Endothelial cell of umbilical vein (primary cell): ENCODE measurements at regions of chr6 and their contacts with region 1.

Region 1: DNA sequence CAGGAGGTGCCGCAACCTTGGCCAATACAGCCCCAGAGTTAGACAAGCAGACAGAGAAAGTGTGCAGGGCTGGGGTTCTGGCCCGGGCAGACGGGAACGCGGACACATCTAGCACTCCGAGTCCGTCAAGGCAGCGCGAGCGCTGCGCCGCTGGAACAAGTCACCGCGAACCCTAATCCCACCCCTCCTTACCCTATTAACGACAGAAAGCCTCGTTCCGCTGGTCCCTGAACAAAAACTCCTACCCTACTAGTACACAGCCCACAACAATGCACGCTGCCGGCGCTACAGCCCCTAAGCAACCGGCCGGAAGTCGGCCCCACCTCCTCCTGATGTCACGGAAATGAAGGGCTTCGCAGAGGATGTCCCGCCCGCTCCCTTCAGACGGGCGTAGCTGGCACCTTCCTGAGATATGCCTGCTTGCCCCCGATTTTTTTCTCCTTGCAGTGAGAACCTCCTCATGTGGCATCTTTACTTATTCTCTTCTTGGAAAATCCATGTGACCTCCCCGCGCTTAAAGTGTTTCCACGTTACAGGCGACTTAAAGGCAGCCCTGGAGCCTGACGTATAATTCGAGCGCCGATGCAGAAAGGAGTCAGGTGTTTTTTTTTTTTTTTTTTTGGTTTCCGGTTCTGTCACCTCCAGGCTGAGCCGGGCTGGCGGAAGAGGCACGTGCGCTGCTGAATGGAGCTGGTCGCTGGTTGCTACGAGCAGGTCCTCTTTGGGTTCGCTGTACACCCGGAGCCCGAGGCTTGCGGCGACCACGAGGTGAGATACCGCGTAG is at the starts of genes C6orf52 and PAK1IP1:
- DNase-seq: peak; percentile 97
- H3K4me3 ChIP-seq: peak within 1 kb of the TSS; percentile 93 to 100 (median 100)
- H3K27ac ChIP-seq: peak within 1 kb of the TSS; percentile 95
- H3K4me1 ChIP-seq: peaks cover 19% of the 10 kb centered on the region
- H3K27me3 ChIP-seq: no peaks in the 10 kb centered on the region
- CTCF ChIP-seq: no peak
- POLR2A ChIP-seq: peak; percentile 92
- total RNA-seq, gene C6orf52: not detected in 2 replicates
- total RNA-seq, gene PAK1IP1: 20.6 and 20.9 TPM in 2 replicates

Region 2: GRCh38 chr6:10478187-10479040 is 216.1 kb before region 1 on chr6:
- CTCF ChIA-PET with region 1: interaction called, 12 read pairs
- POLR2A ChIA-PET with region 1: no interaction called
- dilution Hi-C with region 1: no loop called
- intact Hi-C with region 1: loop called (anchors 1 kb)
- DNase-seq: peak; percentile 52
- H3K4me3 ChIP-seq: no peak overlapping the region
- H3K27ac ChIP-seq: no peak overlapping the region
- H3K4me1 ChIP-seq: no peaks in the 10 kb centered on the region
- H3K27me3 ChIP-seq: no peaks in the 10 kb centered on the region
- CTCF ChIP-seq: peak; percentile 35 to 42
- POLR2A ChIP-seq: no peak

Region 3: GRCh38 chr6:10521104-10521808 is 173.2 kb before region 1 on chr6 and contains the start of gene GCNT2:
- CTCF ChIA-PET with region 1: interaction called, 3 read pairs
- POLR2A ChIA-PET with region 1: no interaction called
- dilution Hi-C with region 1: no loop called
- intact Hi-C with region 1: loop called (anchors 2 kb)
- DNase-seq: peak; percentile 66
- H3K4me3 ChIP-seq: peak within 1 kb of the TSS in 2 of 3 experiments; percentile 10 to 53
- H3K27ac ChIP-seq: peak within 1 kb of the TSS; percentile 85
- H3K4me1 ChIP-seq: peaks cover 38% of the 10 kb centered on the region
- H3K27me3 ChIP-seq: no peaks in the 10 kb centered on the region
- CTCF ChIP-seq: no peak
- POLR2A ChIP-seq: peak; percentile 43
- total RNA-seq, gene GCNT2: 10.9 and 11.4 TPM in 2 replicates

Region 4: DNA sequence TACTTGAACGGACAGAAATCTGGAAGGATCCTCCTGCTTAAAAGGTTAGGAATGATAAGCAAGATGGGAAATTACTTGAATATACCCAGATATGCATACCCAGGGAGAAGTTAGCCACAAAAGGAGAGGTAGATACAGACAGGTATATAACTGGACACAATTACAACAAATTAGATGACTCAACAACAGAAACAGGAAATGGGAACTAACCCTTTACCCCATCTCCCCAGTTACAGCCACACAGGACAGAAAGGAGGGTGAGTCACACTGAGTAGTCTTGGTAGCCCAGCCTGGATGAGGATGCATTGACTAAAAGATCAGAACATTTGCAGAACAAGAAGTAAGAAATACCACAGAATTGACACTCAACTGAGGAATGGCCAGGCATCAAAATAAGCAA is 61.3 kb before region 1 on chr6:
- CTCF ChIA-PET with region 1: no interaction called
- POLR2A ChIA-PET with region 1: no interaction called
- dilution Hi-C with region 1: no loop called
- intact Hi-C with region 1: loop called (anchors 5 kb)
- DNase-seq: peak; percentile 76
- H3K4me3 ChIP-seq: no peak overlapping the region
- H3K27ac ChIP-seq: peak overlapping the region; percentile 35
- H3K4me1 ChIP-seq: peaks cover 10% of the 10 kb centered on the region
- H3K27me3 ChIP-seq: no peaks in the 10 kb centered on the region
- CTCF ChIP-seq: no peak
- POLR2A ChIP-seq: no peak

Region 5: GRCh38 chr6:10747251-10747972 is 52.9 kb after region 1 on chr6 and contains the start of gene TMEM14B:
- CTCF ChIA-PET with region 1: no interaction called
- POLR2A ChIA-PET with region 1: no interaction called
- dilution Hi-C with region 1: no loop called
- intact Hi-C with region 1: loop called (anchors 1 kb)
- DNase-seq: peak; percentile 97
- H3K4me3 ChIP-seq: peak within 1 kb of the TSS; percentile 59 to 94 (median 91)
- H3K27ac ChIP-seq: peak within 1 kb of the TSS; percentile 81
- H3K4me1 ChIP-seq: peaks cover 16% of the 10 kb centered on the region
- H3K27me3 ChIP-seq: no peaks in the 10 kb centered on the region
- CTCF ChIP-seq: no peak
- POLR2A ChIP-seq: peak; percentile 94
- total RNA-seq, gene TMEM14B: 54.6 and 58.2 TPM in 2 replicates

Region 6: GRCh38 chr6:10800829-10801535 is 106.5 kb after region 1 on chr6:
- CTCF ChIA-PET with region 1: interaction called, 5 read pairs
- POLR2A ChIA-PET with region 1: no interaction called
- dilution Hi-C with region 1: no loop called
- intact Hi-C with region 1: loop called (anchors 1 kb)
- DNase-seq: peak; percentile 64
- H3K4me3 ChIP-seq: no peak overlapping the region
- H3K27ac ChIP-seq: no peak overlapping the region
- H3K4me1 ChIP-seq: peaks cover 2% of the 10 kb centered on the region
- H3K27me3 ChIP-seq: no peaks in the 10 kb centered on the region
- CTCF ChIP-seq: peak; percentile 94 to 99
- POLR2A ChIP-seq: no peak